ENCODE measurements at regions of chr17 and their contacts with region 1.

Region 1: GRCh38 chr17:63911657-63912426 is 784 bp upstream of the CSHL1 start:
- DNase-seq: no peak
- H3K4me3 ChIP-seq: no peak overlapping the region
- H3K27ac ChIP-seq: no peak overlapping the region
- H3K4me1 ChIP-seq: peaks cover 0 to 29% (median 14%) of the 10 kb centered on the region in 6 donors
- H3K27me3 ChIP-seq: peaks cover 0 to 5% (median 0%) of the 10 kb centered on the region in 7 donors
- CTCF ChIP-seq: peak; percentile 59 to 96 (median 86)
- POLR2A ChIP-seq: no peak

Region 2: DNA sequence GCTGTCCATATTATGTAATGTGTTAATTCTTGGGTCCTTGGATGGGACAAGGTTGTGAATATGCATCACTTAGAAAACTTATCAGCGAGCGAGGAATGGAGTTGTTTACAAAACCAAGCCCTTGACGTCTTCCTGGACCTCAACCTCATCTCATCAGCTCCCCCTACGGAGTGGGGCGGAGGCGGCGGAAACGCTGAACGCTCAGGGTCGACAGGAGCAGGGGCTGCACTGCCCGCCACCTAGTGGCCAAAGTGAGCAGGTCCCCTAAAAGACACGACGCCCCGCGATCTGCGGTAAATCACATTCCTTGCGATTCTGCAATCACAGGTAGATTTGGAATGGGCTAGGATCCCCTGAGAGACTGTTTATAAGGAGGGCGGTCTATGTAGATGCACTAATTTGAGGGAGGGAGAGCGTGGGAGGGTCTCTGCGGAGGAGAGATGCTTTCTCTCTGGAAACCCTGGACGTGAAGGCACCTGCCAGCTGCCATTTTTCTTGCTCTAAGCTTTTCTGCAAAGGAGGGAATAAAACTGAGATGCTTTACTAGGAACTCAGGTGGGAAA is 114.0 kb after region 1 on chr17:
- intact Hi-C with region 1: loop called (anchors 5 kb)
- DNase-seq: peak; percentile 98
- H3K4me3 ChIP-seq: peak overlapping the region in 3 of 8 donors; percentile 2 to 50 (median 17)
- H3K27ac ChIP-seq: peak overlapping the region; percentile 73 to 98 (median 91)
- H3K4me1 ChIP-seq: peaks cover 18 to 71% (median 46%) of the 10 kb centered on the region in 6 donors
- H3K27me3 ChIP-seq: no peaks in the 10 kb centered on the region
- CTCF ChIP-seq: peak; percentile 95 to 98 (median 98)
- POLR2A ChIP-seq: no peak

Region 3: DNA sequence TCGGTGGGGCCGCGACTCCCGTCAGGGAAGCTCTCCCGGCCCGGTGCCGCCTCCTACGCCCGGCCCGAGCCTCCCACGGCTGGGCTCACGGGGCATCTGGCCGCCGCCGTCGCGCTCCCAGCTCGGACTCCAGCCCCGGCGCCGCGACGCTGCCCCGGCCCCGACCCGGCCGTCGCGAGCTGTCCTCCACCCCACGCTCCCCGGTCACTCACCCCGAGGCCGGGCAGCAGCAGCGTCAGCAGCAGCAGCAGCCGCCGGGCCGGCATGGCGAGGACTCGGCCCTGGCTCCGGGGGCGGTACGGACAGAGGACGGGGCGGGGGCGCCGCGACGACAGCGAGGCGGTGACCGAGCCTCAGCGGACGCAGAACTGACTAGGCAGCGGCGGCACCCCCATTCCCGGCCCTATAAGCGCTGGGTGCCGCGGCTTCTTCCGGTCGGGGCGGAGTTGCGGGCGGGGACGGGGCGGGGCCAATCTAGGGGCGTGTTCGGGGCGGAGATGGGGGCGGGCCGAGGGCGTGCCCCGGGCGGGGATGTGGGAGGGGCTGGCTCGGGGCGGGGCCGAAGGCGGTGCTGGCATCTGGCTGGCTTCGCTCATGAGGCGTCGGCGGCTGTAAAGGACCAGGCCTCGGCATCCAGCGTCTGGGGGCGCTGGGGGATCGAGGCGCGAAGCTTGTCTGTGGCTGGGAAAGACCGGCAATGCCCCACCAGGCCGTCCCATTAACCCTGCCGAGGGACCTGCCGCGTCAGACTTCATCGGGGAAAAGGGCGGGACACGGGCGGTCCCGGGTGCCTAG is 218.1 kb after region 1 on chr17 and contains the start of gene ERN1:
- intact Hi-C with region 1: loop called (anchors 5 kb)
- DNase-seq: peak; percentile 99
- H3K4me3 ChIP-seq: peak within 1 kb of the TSS; percentile 60 to 92 (median 72)
- H3K27ac ChIP-seq: peak within 1 kb of the TSS; percentile 95 to 99 (median 97)
- H3K4me1 ChIP-seq: peaks cover 18 to 78% (median 52%) of the 10 kb centered on the region in 6 donors
- H3K27me3 ChIP-seq: no peaks in the 10 kb centered on the region
- CTCF ChIP-seq: peak in 2 of 11 experiments; percentile 6 to 31
- POLR2A ChIP-seq: peak; percentile 67 to 87 (median 87)
- total RNA-seq, gene ERN1: 34.5 to 65.4 (median 47.2) TPM

Region 4: GRCh38 chr17:64747938-64748540 is 836.2 kb after region 1 on chr17:
- intact Hi-C with region 1: no loop called
- DNase-seq: no peak
- H3K4me3 ChIP-seq: no peak overlapping the region
- H3K27ac ChIP-seq: peak overlapping the region in 3 of 8 donors; percentile 26 to 48 (median 27)
- H3K4me1 ChIP-seq: peaks cover 0 to 7% (median 2%) of the 10 kb centered on the region in 6 donors
- H3K27me3 ChIP-seq: no peaks in the 10 kb centered on the region
- CTCF ChIP-seq: no peak
- POLR2A ChIP-seq: no peak